CD4-positive, alpha-beta T cell (primary cell): ENCODE measurements at regions of chr2 and their contacts with region 1.

Region 1: DNA sequence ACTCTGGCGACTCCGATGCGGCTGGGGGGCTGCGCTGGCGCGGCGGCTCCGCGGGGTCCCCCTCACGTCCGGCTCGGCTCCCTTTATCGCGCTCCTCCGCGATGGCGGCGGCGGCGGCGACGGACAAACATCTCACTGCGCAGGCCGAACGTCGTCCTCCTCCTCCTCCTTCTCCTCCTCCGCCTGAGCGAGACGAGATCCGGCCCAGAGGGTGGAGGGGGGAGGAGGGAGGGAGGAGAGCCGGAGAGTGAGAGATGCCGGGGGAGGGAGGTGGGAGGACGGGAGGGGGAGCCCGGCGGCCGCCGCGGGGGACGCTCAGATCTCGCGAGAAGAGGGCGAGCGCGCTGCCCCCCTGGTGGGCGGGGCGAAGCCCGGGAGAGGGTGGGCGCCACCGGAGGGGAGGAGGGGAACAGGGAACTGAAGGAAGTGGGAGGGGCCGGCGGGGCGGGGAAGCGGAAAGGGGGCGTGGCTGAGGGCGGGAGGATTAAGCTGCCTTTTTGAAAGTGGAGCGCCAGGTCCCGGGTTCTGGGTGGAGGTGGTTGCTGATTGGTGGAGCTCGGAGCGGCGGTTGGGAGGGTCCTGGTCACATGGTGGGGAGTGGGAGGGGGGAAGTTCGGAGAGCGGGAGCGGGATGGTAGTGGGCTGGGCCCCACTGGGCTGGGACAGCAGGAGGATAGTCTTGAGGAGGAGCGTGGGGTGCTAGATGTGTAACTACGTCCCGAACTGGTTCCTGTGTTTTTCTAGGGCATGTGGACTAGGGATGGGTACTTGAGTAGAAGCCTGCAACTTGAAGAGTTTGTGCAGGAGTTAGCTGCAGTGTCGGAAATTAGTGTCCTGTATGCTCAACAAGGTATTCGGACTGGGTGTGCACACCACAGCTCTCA is at the start of gene CUL3:
- DNase-seq: peak; percentile 97 to 100 (median 100)
- ATAC-seq: peak; percentile 86
- H3K4me3 ChIP-seq: peak within 1 kb of the TSS; percentile 91
- H3K4me3 Mint-ChIP-seq: peak within 1 kb of the TSS; percentile 99
- H3K27ac ChIP-seq: peak within 1 kb of the TSS; percentile 73 to 79
- H3K27ac Mint-ChIP-seq: peak within 1 kb of the TSS; percentile 92
- H3K4me1 ChIP-seq: peaks cover 24% of the 10 kb centered on the region
- H3K4me1 Mint-ChIP-seq: peaks cover 45% of the 10 kb centered on the region
- H3K27me3 ChIP-seq: no peaks in the 10 kb centered on the region
- H3K27me3 Mint-ChIP-seq: no peaks in the 10 kb centered on the region
- CTCF ChIP-seq: no peak
- total RNA-seq, gene CUL3: 115 TPM

Region 2: GRCh38 chr2:222860740-222861410 is 1724.6 kb before region 1 on chr2 and contains the start of gene ACSL3:
- CTCF ChIA-PET with region 1: no interaction called
- POLR2A ChIA-PET with region 1: no interaction called
- intact Hi-C with region 1: loop called in 1 of 2 experiments (anchors 5 kb)
- DNase-seq: peak; percentile 82 to 94 (median 89)
- ATAC-seq: peak; percentile 98
- H3K4me3 ChIP-seq: peak within 1 kb of the TSS; percentile 76
- H3K4me3 Mint-ChIP-seq: peak within 1 kb of the TSS; percentile 88
- H3K27ac ChIP-seq: peak within 1 kb of the TSS in 1 of 2 donors; percentile 72
- H3K27ac Mint-ChIP-seq: peak within 1 kb of the TSS; percentile 74
- H3K4me1 ChIP-seq: peaks cover 17% of the 10 kb centered on the region
- H3K4me1 Mint-ChIP-seq: peaks cover 13% of the 10 kb centered on the region
- H3K27me3 ChIP-seq: no peaks in the 10 kb centered on the region
- H3K27me3 Mint-ChIP-seq: no peaks in the 10 kb centered on the region
- CTCF ChIP-seq: no peak
- total RNA-seq, gene ACSL3: 65.5 to 66.6 TPM

Region 3: GRCh38 chr2:224025874-224026273 is 559.6 kb before region 1 on chr2:
- CTCF ChIA-PET with region 1: no interaction called
- POLR2A ChIA-PET with region 1: no interaction called
- intact Hi-C with region 1: no loop called
- DNase-seq: peak in 13 of 14 experiments; percentile 4 to 85 (median 39)
- ATAC-seq: peak; percentile 91
- H3K4me3 ChIP-seq: peak overlapping the region; percentile 14
- H3K4me3 Mint-ChIP-seq: peak overlapping the region; percentile 47
- H3K27ac ChIP-seq: peak overlapping the region in 1 of 2 donors; percentile 73
- H3K27ac Mint-ChIP-seq: peak overlapping the region; percentile 86
- H3K4me1 ChIP-seq: peaks cover 36% of the 10 kb centered on the region
- H3K4me1 Mint-ChIP-seq: peaks cover 65% of the 10 kb centered on the region
- H3K27me3 ChIP-seq: no peaks in the 10 kb centered on the region
- H3K27me3 Mint-ChIP-seq: no peaks in the 10 kb centered on the region
- CTCF ChIP-seq: no peak

Region 4: GRCh38 chr2:224523626-224524577 is 61.5 kb before region 1 on chr2:
- CTCF ChIA-PET with region 1: no interaction called
- POLR2A ChIA-PET with region 1: interaction called, 6 read pairs
- intact Hi-C with region 1: loop called in 1 of 2 experiments (anchors 2 kb)
- DNase-seq: peak in 3 of 14 experiments; percentile 38 to 46 (median 40)
- ATAC-seq: peak; percentile 65
- H3K4me3 ChIP-seq: peak overlapping the region; percentile 4
- H3K4me3 Mint-ChIP-seq: peak overlapping the region; percentile 72
- H3K27ac ChIP-seq: peak overlapping the region; percentile 24 to 47
- H3K27ac Mint-ChIP-seq: peak overlapping the region; percentile 72
- H3K4me1 ChIP-seq: peaks cover 20% of the 10 kb centered on the region
- H3K4me1 Mint-ChIP-seq: peaks cover 82% of the 10 kb centered on the region
- H3K27me3 ChIP-seq: no peaks in the 10 kb centered on the region
- H3K27me3 Mint-ChIP-seq: no peaks in the 10 kb centered on the region
- CTCF ChIP-seq: no peak

Region 5: DNA sequence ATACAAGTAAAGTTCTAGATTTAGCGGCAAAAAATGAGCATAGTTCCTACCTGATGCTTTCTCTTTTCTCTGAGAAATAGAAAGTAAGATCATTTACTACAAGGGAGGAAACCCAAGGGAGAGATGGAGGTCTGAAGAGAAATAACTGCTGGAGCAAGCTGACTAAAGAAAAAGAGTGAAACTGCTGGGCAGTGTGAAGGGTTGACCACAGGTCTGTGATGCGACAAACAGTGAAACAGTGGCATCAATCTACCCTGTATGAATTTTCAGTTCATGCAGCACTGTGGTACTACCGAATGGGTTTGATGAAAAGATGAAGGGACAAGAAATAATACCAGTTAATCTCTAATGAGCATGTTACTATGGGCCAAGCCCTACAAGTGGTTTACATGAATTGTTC is 52.5 kb before region 1 on chr2:
- CTCF ChIA-PET with region 1: no interaction called
- POLR2A ChIA-PET with region 1: no interaction called
- intact Hi-C with region 1: loop called in 1 of 2 experiments (anchors 5 kb)
- DNase-seq: no peak
- ATAC-seq: no peak
- H3K4me3 ChIP-seq: no peak overlapping the region
- H3K4me3 Mint-ChIP-seq: no peak overlapping the region
- H3K27ac ChIP-seq: no peak overlapping the region
- H3K27ac Mint-ChIP-seq: peak overlapping the region; percentile 22
- H3K4me1 ChIP-seq: peaks cover 6% of the 10 kb centered on the region
- H3K4me1 Mint-ChIP-seq: peaks cover 62% of the 10 kb centered on the region
- H3K27me3 ChIP-seq: no peaks in the 10 kb centered on the region
- H3K27me3 Mint-ChIP-seq: no peaks in the 10 kb centered on the region
- CTCF ChIP-seq: no peak

Region 6: DNA sequence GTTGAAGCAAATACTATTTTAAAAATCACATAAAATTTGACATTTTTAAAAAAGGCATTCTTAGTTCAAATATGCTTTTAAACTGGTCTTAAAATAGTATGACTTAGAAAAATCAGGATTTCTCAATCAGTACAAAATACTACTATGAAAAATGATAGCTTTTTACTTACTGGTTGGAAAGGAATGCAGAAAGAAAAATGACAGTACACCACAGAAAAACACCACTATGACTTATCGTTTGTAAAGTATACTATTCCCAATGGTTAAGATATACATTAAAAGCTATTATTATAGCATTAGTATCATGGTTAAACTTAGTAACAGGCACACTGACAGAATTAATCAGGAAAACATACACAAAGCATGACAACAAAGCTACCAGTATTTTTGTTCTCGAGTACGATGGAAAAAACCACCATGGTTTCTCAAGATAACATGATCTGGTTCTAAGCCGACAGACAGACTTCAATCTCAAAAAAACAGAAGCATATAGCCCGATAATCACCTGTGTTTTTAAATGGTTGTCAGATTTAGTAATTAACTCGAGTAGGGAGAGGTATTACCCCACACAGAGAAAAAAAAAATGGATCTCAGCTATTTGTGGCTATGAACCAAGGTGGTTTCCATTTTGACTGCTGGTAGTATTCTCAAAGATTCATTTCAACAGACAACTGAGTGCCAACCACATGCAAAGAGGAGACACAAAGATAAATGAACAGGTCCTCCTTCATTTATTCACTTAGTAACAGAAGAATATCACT is 39.4 kb before region 1 on chr2:
- CTCF ChIA-PET with region 1: no interaction called
- POLR2A ChIA-PET with region 1: interaction called, 3 read pairs
- intact Hi-C with region 1: loop called in 1 of 2 experiments (anchors 5 kb)
- DNase-seq: no peak
- ATAC-seq: no peak
- H3K4me3 ChIP-seq: no peak overlapping the region
- H3K4me3 Mint-ChIP-seq: no peak overlapping the region
- H3K27ac ChIP-seq: no peak overlapping the region
- H3K27ac Mint-ChIP-seq: peak overlapping the region; percentile 1
- H3K4me1 ChIP-seq: peaks cover 6% of the 10 kb centered on the region
- H3K4me1 Mint-ChIP-seq: peaks cover 58% of the 10 kb centered on the region
- H3K27me3 ChIP-seq: no peaks in the 10 kb centered on the region
- H3K27me3 Mint-ChIP-seq: no peaks in the 10 kb centered on the region
- CTCF ChIP-seq: no peak

Region 7: GRCh38 chr2:224601923-224602322 is 16.5 kb after region 1 on chr2:
- CTCF ChIA-PET with region 1: interaction called, 4 read pairs
- POLR2A ChIA-PET with region 1: interaction called, 14 read pairs
- intact Hi-C with region 1: no loop called
- DNase-seq: no peak
- ATAC-seq: no peak
- H3K4me3 ChIP-seq: no peak overlapping the region
- H3K4me3 Mint-ChIP-seq: no peak overlapping the region
- H3K27ac ChIP-seq: no peak overlapping the region
- H3K27ac Mint-ChIP-seq: no peak overlapping the region
- H3K4me1 ChIP-seq: peaks cover 5% of the 10 kb centered on the region
- H3K4me1 Mint-ChIP-seq: peaks cover 12% of the 10 kb centered on the region
- H3K27me3 ChIP-seq: no peaks in the 10 kb centered on the region
- H3K27me3 Mint-ChIP-seq: peaks cover 10% of the 10 kb centered on the region
- CTCF ChIP-seq: no peak

Region 8: GRCh38 chr2:224628416-224628815 is 43.0 kb after region 1 on chr2:
- CTCF ChIA-PET with region 1: no interaction called
- POLR2A ChIA-PET with region 1: no interaction called
- intact Hi-C with region 1: no loop called
- DNase-seq: no peak
- ATAC-seq: no peak
- H3K4me3 ChIP-seq: no peak overlapping the region
- H3K4me3 Mint-ChIP-seq: no peak overlapping the region
- H3K27ac ChIP-seq: no peak overlapping the region
- H3K27ac Mint-ChIP-seq: no peak overlapping the region
- H3K4me1 ChIP-seq: no peaks in the 10 kb centered on the region
- H3K4me1 Mint-ChIP-seq: no peaks in the 10 kb centered on the region
- H3K27me3 ChIP-seq: no peaks in the 10 kb centered on the region
- H3K27me3 Mint-ChIP-seq: no peaks in the 10 kb centered on the region
- CTCF ChIP-seq: no peak

Region 9: GRCh38 chr2:225041851-225042799 is 456.7 kb after region 1 on chr2 and contains the start of gene DOCK10:
- CTCF ChIA-PET with region 1: no interaction called
- POLR2A ChIA-PET with region 1: no interaction called
- intact Hi-C with region 1: loop called in 1 of 2 experiments (anchors 10 kb)
- DNase-seq: peak; percentile 35 to 83 (median 54)
- ATAC-seq: peak; percentile 66
- H3K4me3 ChIP-seq: peak within 1 kb of the TSS; percentile 94
- H3K4me3 Mint-ChIP-seq: peak within 1 kb of the TSS; percentile 100
- H3K27ac ChIP-seq: peak within 1 kb of the TSS; percentile 87
- H3K27ac Mint-ChIP-seq: peak within 1 kb of the TSS; percentile 94
- H3K4me1 ChIP-seq: peaks cover 23% of the 10 kb centered on the region
- H3K4me1 Mint-ChIP-seq: peaks cover 60% of the 10 kb centered on the region
- H3K27me3 ChIP-seq: no peaks in the 10 kb centered on the region
- H3K27me3 Mint-ChIP-seq: no peaks in the 10 kb centered on the region
- CTCF ChIP-seq: no peak
- total RNA-seq, gene DOCK10: 184 to 209 TPM